ENCODE measurements at regions of chr6 and their contacts with region 1.

Region 1: GRCh38 chr6:39166189-39166911 is 51.4 kb upstream of the SAYSD1 start:
- DNase-seq: peak; percentile 80
- H3K4me3 ChIP-seq: no peak overlapping the region
- H3K27ac ChIP-seq: no peak overlapping the region
- H3K4me1 ChIP-seq: no peaks in the 10 kb centered on the region
- H3K27me3 ChIP-seq: peaks cover 32% of the 10 kb centered on the region
- CTCF ChIP-seq: peak; percentile 92

Region 2: DNA sequence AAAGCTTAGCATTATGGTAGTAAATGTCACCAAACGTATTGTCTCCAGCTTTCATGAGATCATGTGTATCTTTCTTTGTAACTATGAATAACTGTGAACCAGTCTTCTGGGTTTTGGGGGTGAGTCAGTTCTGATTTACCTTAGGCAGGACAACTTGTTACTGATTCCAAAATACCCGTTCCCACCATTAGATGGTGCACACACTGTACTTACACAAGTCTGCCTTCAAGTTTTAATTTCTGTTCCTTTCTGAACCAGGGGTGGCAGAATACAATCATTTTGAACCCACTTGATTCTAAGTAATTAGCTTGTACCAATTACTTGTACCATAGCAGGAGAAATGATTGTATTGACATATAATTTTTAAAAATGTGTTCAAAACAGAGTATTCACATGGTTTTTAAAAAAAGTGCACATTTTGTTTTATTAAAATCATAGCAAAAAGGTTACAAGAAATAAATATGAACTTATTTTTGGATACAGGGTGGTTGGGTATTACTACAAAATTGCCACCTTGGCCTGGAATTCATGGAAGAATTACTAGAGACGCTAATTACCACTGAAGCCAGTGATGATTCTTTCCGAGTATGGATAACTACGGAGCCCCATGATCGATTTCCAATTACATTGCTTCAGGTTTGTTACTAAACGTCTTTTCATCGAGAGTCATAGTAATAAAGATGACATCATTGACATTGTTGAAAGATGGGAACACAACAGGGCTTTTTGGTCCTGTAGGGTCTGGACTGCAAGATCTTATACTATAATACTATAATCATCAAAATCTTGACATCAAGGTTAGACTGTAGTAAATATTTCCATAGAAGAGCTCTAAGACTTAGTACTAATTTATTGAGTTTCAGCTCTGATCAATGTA is 192.9 kb before region 1 on chr6:
- CTCF ChIA-PET with region 1: no interaction called
- POLR2A ChIA-PET with region 1: no interaction called
- intact Hi-C with region 1: loop called (anchors 10 kb)
- DNase-seq: peak; percentile 63
- H3K4me3 ChIP-seq: no peak overlapping the region
- H3K27ac ChIP-seq: no peak overlapping the region
- H3K4me1 ChIP-seq: no peaks in the 10 kb centered on the region
- H3K27me3 ChIP-seq: peaks cover 44% of the 10 kb centered on the region
- CTCF ChIP-seq: peak; percentile 65

Region 3: DNA sequence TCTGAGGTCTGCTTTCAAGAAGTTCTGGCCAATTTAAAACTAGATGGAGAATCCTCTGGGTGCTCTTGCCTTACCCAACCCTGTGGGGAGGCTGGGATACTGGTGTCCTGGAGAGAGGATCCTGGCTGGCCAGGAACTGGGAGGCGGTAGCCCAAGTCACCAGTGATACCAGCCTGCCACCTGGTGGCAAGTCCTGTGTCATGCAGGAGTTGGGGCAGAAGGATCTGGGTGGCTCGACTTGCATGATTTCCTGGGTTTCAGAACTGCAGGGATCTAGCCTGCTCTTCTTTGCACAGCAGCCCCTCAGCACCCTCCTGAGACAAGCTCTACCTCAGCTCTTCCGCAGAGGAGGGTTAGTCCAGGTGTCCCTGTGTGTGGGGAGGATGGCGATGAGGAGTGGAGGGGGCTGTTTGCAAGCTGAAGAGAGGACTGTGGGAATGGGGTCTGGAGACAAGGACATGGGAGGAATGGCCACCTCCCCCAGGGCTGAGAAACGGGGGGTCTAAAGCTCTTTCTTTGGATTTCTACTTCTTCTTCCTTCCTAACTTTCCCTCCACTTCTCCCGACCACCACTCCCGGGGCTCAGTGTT is 143.7 kb after region 1 on chr6:
- CTCF ChIA-PET with region 1: interaction called, 4 read pairs
- POLR2A ChIA-PET with region 1: no interaction called
- intact Hi-C with region 1: loop called (anchors 1 kb)
- DNase-seq: peak; percentile 75
- H3K4me3 ChIP-seq: no peak overlapping the region
- H3K27ac ChIP-seq: no peak overlapping the region
- H3K4me1 ChIP-seq: no peaks in the 10 kb centered on the region
- H3K27me3 ChIP-seq: peaks cover 40% of the 10 kb centered on the region
- CTCF ChIP-seq: peak; percentile 92